Activated T-helper 2 cell treated with anti-CD3 and anti-CD28 coated beads, Interferon-gamma antibody, Interleukin-2, Interleukin-4, amounts not matched to agents 10 μg/mL and 5 μg/mL and 100 μg/mL, durations not matched to agents 14 hours and 24 hours and 36 hours (primary cell): ENCODE measurements at regions of chr2 and their contacts with region 1.

Region 1: GRCh38 chr2:10448208-10448645 is at the start of gene ODC1:
- DNase-seq: peak; percentile 91
- H3K4me3 Mint-ChIP-seq: peak within 1 kb of the TSS; percentile 94
- H3K27ac Mint-ChIP-seq: peak within 1 kb of the TSS; percentile 92
- H3K4me1 Mint-ChIP-seq: peaks cover 36% of the 10 kb centered on the region
- H3K27me3 Mint-ChIP-seq: no peaks in the 10 kb centered on the region
- total RNA-seq, gene ODC1: 161 and 164 TPM in 2 replicates

Region 2: DNA sequence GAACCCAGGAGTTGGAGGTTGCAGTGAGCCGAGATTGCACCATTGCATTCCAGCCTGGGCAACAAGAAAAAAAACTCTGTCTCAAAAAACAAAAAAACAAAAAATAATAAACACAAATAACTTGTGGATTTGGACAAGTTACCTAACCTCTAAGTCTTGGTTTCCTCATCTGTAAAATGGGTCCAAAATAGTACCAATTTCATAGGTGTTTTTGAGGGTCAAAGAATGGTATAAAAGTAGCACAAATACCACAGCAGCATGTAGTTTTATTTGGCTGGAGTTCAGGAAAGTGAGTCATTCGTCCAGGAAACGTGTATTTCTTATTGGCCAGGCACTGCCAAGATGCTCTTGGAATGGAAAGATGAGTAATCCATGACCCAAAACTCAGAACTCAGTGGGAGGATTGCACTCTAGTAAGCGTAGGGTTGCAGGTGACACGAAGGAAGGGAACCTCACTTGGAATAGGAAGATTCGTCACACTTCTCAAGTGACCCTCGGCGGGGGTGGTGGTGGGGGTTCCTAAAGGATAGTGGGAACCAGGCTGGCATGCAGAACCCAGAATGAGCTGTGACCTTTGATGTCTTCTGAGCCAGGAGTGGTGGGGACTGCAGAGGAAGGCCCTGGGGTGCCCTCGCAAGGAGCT is 472.3 kb before region 1 on chr2:
- intact Hi-C with region 1: loop called (anchors 10 kb)
- DNase-seq: no peak
- H3K4me3 Mint-ChIP-seq: no peak overlapping the region
- H3K27ac Mint-ChIP-seq: peak overlapping the region; percentile 31
- H3K4me1 Mint-ChIP-seq: peaks cover 64% of the 10 kb centered on the region
- H3K27me3 Mint-ChIP-seq: peaks cover 6% of the 10 kb centered on the region